ENCODE measurements at regions of chr3 and their contacts with region 1.

Region 1: DNA sequence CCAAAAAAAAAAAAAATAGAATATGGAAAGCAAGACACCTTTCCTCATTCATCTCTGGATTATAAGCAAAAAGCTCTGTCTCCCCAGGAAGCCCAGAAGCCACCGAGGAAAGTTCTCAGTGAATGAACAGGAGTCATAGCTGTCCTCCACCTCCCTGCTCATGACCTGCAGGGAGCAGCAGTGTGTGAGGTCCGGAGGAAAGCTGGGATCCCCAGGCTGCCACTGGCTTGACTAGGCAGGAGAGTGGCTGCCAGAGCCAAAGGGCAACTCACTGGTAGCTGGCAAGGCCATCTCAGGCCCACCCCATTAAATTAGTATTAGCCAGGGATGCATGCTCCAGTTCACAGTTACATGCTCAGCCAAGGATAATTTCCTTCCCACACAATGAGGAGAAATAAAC is 191.6 kb upstream of the STT3B start:
- DNase-seq: peak in 1 of 4 experiments; percentile 21
- ATAC-seq: peak; percentile 86
- H3K4me3 ChIP-seq: no peak overlapping the region
- H3K27ac ChIP-seq: no peak overlapping the region
- H3K4me1 ChIP-seq: no peaks in the 10 kb centered on the region
- H3K27me3 ChIP-seq: no peaks in the 10 kb centered on the region
- CTCF ChIP-seq: peak; percentile 10 to 41 (median 21); a peak in 2 of 6 replicates
- EP300 ChIP-seq: no peak
- POLR2A ChIP-seq: no peak
- RAD21 ChIP-seq: peak in 1 of 2 experiments; percentile 46; a peak in 2 of 4 replicates

Region 2: DNA sequence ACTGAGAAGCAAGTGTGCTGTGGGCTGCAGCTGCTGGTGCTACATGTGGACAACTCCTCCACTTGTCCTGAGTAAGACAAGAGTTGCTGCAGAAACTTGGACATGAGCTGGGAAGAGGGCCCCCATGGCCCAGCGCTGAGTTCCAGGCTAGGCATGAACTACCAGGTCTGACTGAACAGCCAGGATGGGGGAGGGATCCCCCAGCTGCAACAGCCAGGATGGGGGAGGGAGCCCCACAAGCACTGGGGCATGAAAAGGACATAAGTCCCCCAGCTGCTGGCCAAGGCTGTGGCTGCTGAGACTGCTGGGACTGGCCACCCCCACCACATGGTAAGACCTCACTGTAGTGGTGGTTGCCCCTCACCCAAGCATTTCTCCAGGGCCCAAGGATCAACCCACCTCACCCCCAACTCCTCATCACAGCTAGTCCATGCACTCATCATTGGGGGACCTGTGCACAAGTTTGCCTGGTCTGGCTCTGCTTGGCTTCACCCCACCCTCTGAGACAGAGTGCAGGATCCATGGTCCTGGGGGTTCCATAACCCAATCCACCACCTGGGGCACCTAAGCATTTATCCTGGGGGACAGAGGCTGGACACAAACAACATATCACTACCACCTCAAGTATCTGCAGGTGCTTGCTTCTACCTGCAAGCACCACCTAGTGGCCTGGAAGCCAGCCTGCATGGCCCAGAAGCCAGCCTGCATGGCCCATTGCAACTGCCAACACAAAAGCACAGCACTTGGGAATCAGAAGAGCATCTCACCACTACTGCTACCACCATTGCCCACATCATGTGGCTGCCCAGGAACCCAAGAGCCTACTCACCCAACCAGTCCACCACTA is 107.1 kb after region 1 on chr3:
- CTCF ChIA-PET with region 1: no interaction called
- POLR2A ChIA-PET with region 1: no interaction called
- in situ Hi-C with region 1: no loop called
- intact Hi-C with region 1: loop called (anchors 1 kb)
- DNase-seq: peak in 2 of 4 experiments; percentile 15 to 49
- ATAC-seq: peak; percentile 80
- H3K4me3 ChIP-seq: no peak overlapping the region
- H3K27ac ChIP-seq: no peak overlapping the region
- H3K4me1 ChIP-seq: peaks cover 0 to under 1% of the 10 kb centered on the region in 2 experiments; a peak in 1 of 5 replicates
- H3K27me3 ChIP-seq: peaks cover 7 to 11% of the 10 kb centered on the region in 2 experiments
- CTCF ChIP-seq: peak; percentile 61 to 68 (median 68)
- EP300 ChIP-seq: no peak
- POLR2A ChIP-seq: no peak
- RAD21 ChIP-seq: peak in 1 of 2 experiments; percentile 66; a peak in 2 of 4 replicates